Sigmoid colon (tissue), 7 donors: ENCODE measurements at regions of chr20 and their contacts with region 1.

Region 1: DNA sequence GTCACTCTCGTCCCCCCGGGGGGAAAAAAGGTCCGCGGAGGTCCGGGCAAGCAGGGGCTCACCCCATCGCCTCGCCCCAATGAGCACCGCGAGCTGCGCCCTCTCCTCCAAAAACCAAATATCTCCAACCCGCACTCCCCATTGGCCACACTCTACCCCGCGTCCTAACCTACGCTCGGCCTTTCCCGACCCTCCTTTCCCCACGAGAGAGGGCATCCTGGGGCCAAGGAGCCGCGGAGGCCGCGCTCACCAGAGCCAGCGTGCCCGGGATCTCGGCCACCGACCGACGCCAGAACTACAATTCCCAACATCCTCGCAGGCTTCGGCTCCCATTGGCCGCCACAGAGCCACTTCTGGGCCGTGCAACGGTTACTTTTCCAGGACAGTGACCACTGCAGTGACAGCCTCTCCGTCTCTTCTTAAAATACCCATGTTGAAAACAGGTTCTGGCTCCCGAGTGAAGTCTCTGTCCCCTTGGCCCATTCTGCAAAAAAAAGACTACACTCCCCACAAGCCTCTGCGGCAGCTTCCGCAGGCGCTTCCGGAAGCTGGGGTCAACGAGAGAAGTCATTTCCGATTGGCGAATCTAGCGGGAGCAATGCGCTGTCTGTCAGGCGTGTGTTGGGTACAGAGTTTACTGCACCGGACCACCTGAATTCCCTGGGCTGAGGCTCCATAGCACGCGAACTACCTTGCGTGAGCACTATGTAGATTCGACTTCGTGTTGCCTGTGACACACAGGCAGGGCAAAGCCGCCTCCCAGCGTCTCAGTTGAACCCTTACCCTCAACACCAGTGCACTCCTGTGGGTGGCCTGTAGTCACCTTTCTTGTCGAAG is at the start of gene ZNF343:
- DNase-seq: peak; percentile 89
- H3K4me3 ChIP-seq: peak within 1 kb of the TSS; percentile 73 to 96 (median 86)
- H3K27ac ChIP-seq: peak within 1 kb of the TSS; percentile 81 to 88 (median 86)
- H3K4me1 ChIP-seq: peaks cover 0 to 21% (median 14%) of the 10 kb centered on the region in 4 donors
- H3K27me3 ChIP-seq: no peaks in the 10 kb centered on the region
- CTCF ChIP-seq: no peak
- EP300 ChIP-seq: no peak
- POLR2A ChIP-seq: peak; percentile 9 to 61
- total RNA-seq, gene ZNF343: 10.7 to 16.3 (median 11.8) TPM

Region 2: GRCh38 chr20:2416541-2417212 is 92.2 kb before region 1 on chr20:
- intact Hi-C with region 1: no loop called
- DNase-seq: no peak
- H3K4me3 ChIP-seq: no peak overlapping the region
- H3K27ac ChIP-seq: no peak overlapping the region
- H3K4me1 ChIP-seq: no peaks in the 10 kb centered on the region
- H3K27me3 ChIP-seq: no peaks in the 10 kb centered on the region
- CTCF ChIP-seq: no peak
- EP300 ChIP-seq: no peak
- POLR2A ChIP-seq: no peak

Region 3: GRCh38 chr20:2470423-2471193 is 38.2 kb before region 1 on chr20 and contains the start of gene SNRPB:
- intact Hi-C with region 1: loop called (anchors 2 kb)
- DNase-seq: peak; percentile 99
- H3K4me3 ChIP-seq: peak within 1 kb of the TSS; percentile 45 to 79 (median 69)
- H3K27ac ChIP-seq: peak within 1 kb of the TSS; percentile 85 to 95 (median 92)
- H3K4me1 ChIP-seq: peaks cover 0 to 32% (median 27%) of the 10 kb centered on the region in 4 donors
- H3K27me3 ChIP-seq: no peaks in the 10 kb centered on the region
- CTCF ChIP-seq: no peak
- EP300 ChIP-seq: peak in 1 of 4 donors; percentile 12
- POLR2A ChIP-seq: peak; percentile 62 to 83
- total RNA-seq, gene SNRPB: 80.0 to 165 (median 142) TPM